CD4-positive, alpha-beta memory T cell (primary cell): ENCODE measurements at regions of chr2 and their contacts with region 1.

Region 1: DNA sequence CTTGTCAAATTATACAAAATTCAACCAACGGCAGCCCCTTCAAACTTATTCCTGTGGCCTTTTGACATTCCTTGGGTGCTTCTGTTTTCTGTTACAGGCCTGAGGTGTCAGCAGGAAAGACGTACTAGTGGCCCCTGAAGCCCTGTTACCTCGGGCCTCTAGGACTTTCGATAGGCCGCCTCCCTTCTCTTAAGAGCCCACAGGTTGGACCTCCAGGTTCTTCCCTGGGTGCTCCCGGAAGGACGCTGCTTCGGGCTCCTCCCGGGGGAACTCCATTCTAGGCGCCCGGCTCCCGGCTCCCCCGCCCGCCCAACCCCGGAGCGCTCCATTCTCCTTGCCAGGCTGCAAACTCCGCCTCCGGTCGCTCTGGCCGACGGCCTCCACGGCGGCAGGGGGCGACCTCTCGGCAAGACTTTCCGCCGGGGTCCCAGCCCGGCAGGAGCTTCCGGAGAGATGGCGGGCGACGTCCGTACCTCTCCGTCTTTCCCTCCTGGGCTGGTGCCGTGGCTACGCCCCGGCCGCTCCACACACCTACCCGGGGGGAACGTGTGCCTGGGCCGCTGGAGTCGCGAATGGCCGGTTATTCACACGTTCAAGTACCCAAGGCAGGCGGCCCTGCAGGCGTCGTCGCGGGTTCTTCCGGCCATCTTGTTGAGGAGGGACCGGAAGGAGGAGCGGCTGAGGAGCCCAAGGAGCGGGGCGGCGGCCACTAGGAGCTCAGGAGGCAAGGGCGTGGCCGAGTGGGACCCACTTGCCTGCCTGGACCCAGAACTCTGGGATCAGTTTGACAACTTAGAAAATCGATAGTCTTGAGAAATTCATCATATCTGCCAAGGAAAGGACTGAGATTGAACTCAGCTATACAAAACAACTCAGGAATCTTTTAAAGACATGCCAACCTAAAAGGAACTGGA is 27.5 kb downstream of the BOLA3 start:
- DNase-seq: peak; percentile 79 to 85 (median 80)
- H3K4me3 ChIP-seq: peak overlapping the region; percentile 33 to 94
- H3K4me3 Mint-ChIP-seq: peak overlapping the region; percentile 85 to 92 (median 88)
- H3K27ac ChIP-seq: peak overlapping the region; percentile 70
- H3K27ac Mint-ChIP-seq: peak overlapping the region; percentile 79 to 97 (median 92)
- H3K4me1 ChIP-seq: no peaks in the 10 kb centered on the region
- H3K4me1 Mint-ChIP-seq: peaks cover 4 to 11% (median 7%) of the 10 kb centered on the region in 4 donors
- H3K27me3 ChIP-seq: no peaks in the 10 kb centered on the region
- H3K27me3 Mint-ChIP-seq: peaks cover 0 to under 1% of the 10 kb centered on the region in 2 donors

Region 2: DNA sequence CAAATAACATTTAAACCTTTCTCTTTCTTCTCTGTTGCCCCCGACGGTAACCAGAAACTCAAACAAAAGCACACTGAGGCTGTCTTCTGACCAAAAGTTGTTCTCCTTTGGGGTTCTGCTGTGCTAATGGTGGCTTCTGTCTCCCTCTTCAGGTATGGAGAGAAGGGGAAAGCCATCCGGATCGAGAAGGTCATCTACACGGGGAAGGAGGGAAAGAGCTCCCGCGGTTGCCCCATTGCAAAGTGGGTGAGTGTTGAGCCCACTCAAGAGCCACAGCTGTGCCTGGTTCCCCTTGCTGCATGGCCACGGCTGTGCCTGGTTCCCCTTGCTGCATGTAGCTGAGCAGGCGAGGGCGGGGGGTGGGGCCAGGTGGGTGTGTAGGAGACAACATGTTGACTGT is 39.8 kb before region 1 on chr2:
- CTCF ChIA-PET with region 1: no interaction called
- POLR2A ChIA-PET with region 1: no interaction called
- intact Hi-C with region 1: no loop called
- DNase-seq: no peak
- H3K4me3 ChIP-seq: no peak overlapping the region
- H3K4me3 Mint-ChIP-seq: no peak overlapping the region
- H3K27ac ChIP-seq: no peak overlapping the region
- H3K27ac Mint-ChIP-seq: peak overlapping the region in 2 of 7 donors; percentile 14 to 36
- H3K4me1 ChIP-seq: no peaks in the 10 kb centered on the region
- H3K4me1 Mint-ChIP-seq: peaks cover 0 to 2% (median 0%) of the 10 kb centered on the region in 4 donors
- H3K27me3 ChIP-seq: no peaks in the 10 kb centered on the region
- H3K27me3 Mint-ChIP-seq: no peaks in the 10 kb centered on the region

Region 3: GRCh38 chr2:74104839-74105238 is 15.3 kb before region 1 on chr2:
- CTCF ChIA-PET with region 1: interaction called, 13 read pairs
- POLR2A ChIA-PET with region 1: no interaction called
- intact Hi-C with region 1: no loop called
- DNase-seq: peak in 2 of 5 donors; percentile 9 to 17
- H3K4me3 ChIP-seq: no peak overlapping the region
- H3K4me3 Mint-ChIP-seq: no peak overlapping the region
- H3K27ac ChIP-seq: no peak overlapping the region
- H3K27ac Mint-ChIP-seq: peak overlapping the region in 3 of 7 donors; percentile 36 to 61 (median 53)
- H3K4me1 ChIP-seq: no peaks in the 10 kb centered on the region
- H3K4me1 Mint-ChIP-seq: no peaks in the 10 kb centered on the region
- H3K27me3 ChIP-seq: no peaks in the 10 kb centered on the region
- H3K27me3 Mint-ChIP-seq: no peaks in the 10 kb centered on the region

Region 4: GRCh38 chr2:74198461-74199274 is 78.5 kb after region 1 on chr2 and contains the start of gene MTHFD2:
- CTCF ChIA-PET with region 1: no interaction called
- POLR2A ChIA-PET with region 1: interaction called, 15 read pairs
- intact Hi-C with region 1: loop called (anchors 1 kb)
- DNase-seq: peak; percentile 84 to 89 (median 86)
- H3K4me3 ChIP-seq: peak within 1 kb of the TSS; percentile 85 to 91
- H3K4me3 Mint-ChIP-seq: peak within 1 kb of the TSS; percentile 94 to 100 (median 98)
- H3K27ac ChIP-seq: peak within 1 kb of the TSS; percentile 86
- H3K27ac Mint-ChIP-seq: peak within 1 kb of the TSS; percentile 89 to 100 (median 99)
- H3K4me1 ChIP-seq: peaks cover 35% of the 10 kb centered on the region
- H3K4me1 Mint-ChIP-seq: peaks cover 20 to 41% (median 31%) of the 10 kb centered on the region in 4 donors
- H3K27me3 ChIP-seq: no peaks in the 10 kb centered on the region
- H3K27me3 Mint-ChIP-seq: no peaks in the 10 kb centered on the region
- total RNA-seq, gene MTHFD2: 23.8 to 25.0 TPM